Prostate gland (tissue), 2 donors: ENCODE measurements at regions of chr10 and their contacts with region 1.

Region 1: GRCh38 chr10:132452631-132453469 is 55.9 kb downstream of the PWWP2B start:
- DNase-seq: peak; percentile 84
- H3K4me3 ChIP-seq: peak overlapping the region in 1 of 2 donors; percentile 6
- H3K27ac ChIP-seq: peak overlapping the region in 1 of 2 donors; percentile 19
- H3K4me1 ChIP-seq: peaks cover 10% of the 10 kb centered on the region
- H3K27me3 ChIP-seq: no peaks in the 10 kb centered on the region
- CTCF ChIP-seq: peak; percentile 96 to 100 (median 99)
- POLR2A ChIP-seq: no peak

Region 2: DNA sequence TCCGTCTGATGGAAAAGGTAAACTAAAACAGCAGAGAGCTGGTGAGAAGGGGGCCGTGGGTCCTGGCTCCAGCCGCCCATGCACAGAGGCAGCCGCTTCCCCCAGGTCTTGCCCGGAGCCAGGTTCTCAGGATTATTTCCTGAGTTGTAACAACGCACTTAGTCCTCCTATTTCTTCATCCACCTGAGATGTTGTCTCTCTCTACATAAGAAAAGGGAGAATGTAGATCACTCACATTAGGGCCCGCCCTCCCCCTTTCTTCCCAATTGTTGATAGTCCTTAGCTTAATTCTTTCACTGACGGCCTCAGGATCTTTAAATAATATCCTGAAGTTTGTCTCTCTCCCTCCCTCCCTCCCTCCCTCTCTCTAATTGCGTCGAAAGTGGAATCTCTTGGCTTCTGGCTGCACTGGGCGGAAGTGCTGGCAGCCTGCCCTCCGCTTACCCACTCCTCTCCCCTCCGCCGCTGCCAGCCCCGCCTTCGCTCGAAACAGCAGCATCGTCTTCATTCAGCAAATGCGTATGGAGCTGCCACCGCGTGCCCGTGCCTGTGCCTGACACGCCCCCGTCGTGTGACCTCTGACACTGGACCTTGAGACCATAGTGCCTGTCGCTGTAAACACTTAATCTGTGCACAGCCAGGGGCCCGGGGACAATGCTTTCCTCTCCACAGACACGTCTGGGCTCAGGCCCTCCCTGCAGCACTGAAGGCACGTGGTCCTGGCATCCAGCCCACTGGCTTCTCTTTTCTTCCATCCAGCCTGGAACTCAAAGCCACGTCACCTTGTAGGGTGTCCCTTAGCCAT is 726.6 kb before region 1 on chr10:
- intact Hi-C with region 1: no loop called
- DNase-seq: peak; percentile 32
- H3K4me3 ChIP-seq: no peak overlapping the region
- H3K27ac ChIP-seq: no peak overlapping the region
- H3K4me1 ChIP-seq: no peaks in the 10 kb centered on the region
- H3K27me3 ChIP-seq: no peaks in the 10 kb centered on the region
- CTCF ChIP-seq: no peak
- POLR2A ChIP-seq: no peak

Region 3: GRCh38 chr10:132223156-132223590 is 229.7 kb before region 1 on chr10:
- intact Hi-C with region 1: loop called (anchors 2 kb)
- DNase-seq: peak; percentile 64
- H3K4me3 ChIP-seq: no peak overlapping the region
- H3K27ac ChIP-seq: no peak overlapping the region
- H3K4me1 ChIP-seq: no peaks in the 10 kb centered on the region
- H3K27me3 ChIP-seq: no peaks in the 10 kb centered on the region
- CTCF ChIP-seq: peak; percentile 54 to 95 (median 83)
- POLR2A ChIP-seq: no peak

Region 4: GRCh38 chr10:132387764-132388210 is 65.1 kb before region 1 on chr10:
- intact Hi-C with region 1: loop called (anchors 1 kb)
- DNase-seq: no peak
- H3K4me3 ChIP-seq: no peak overlapping the region
- H3K27ac ChIP-seq: no peak overlapping the region
- H3K4me1 ChIP-seq: no peaks in the 10 kb centered on the region
- H3K27me3 ChIP-seq: no peaks in the 10 kb centered on the region
- CTCF ChIP-seq: peak; percentile 63 to 84 (median 74)
- POLR2A ChIP-seq: no peak

Region 5: DNA sequence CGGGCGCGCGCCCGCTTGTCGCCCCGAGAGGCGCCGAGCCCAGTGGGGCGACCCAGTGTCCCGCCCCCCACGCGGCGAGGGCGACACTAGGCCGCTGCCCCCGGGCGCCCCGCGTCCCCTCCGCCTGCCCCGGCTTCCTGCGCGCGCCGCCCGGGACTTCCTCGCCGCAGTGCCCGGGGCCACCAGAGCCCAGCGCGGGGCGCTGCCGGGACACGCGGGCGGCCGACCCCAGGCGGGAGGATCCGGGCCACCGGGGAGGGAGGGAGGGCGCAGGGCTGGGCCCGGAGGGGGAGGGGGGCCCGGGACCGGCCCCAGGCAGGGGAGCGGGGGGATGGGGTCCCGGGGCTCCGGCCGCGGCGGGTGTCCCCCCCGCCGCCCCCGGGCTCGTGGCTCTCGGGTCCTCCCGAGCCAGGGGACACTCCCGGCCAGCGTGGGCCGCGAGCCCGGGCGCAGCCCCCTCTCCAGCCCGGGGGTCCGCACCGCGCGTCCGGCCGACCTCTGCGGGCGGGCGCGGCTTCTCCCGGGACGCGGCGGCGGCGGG is 56.3 kb before region 1 on chr10:
- intact Hi-C with region 1: loop called (anchors 2 kb)
- DNase-seq: peak; percentile 65
- H3K4me3 ChIP-seq: peak overlapping the region; percentile 71 to 87
- H3K27ac ChIP-seq: peak overlapping the region; percentile 90 to 97
- H3K4me1 ChIP-seq: peaks cover 26% of the 10 kb centered on the region
- H3K27me3 ChIP-seq: no peaks in the 10 kb centered on the region
- CTCF ChIP-seq: peak in 3 of 4 experiments; percentile 16 to 59 (median 53)
- POLR2A ChIP-seq: no peak